ENCODE measurements at regions of chr10 and their contacts with region 1.

Region 1: DNA sequence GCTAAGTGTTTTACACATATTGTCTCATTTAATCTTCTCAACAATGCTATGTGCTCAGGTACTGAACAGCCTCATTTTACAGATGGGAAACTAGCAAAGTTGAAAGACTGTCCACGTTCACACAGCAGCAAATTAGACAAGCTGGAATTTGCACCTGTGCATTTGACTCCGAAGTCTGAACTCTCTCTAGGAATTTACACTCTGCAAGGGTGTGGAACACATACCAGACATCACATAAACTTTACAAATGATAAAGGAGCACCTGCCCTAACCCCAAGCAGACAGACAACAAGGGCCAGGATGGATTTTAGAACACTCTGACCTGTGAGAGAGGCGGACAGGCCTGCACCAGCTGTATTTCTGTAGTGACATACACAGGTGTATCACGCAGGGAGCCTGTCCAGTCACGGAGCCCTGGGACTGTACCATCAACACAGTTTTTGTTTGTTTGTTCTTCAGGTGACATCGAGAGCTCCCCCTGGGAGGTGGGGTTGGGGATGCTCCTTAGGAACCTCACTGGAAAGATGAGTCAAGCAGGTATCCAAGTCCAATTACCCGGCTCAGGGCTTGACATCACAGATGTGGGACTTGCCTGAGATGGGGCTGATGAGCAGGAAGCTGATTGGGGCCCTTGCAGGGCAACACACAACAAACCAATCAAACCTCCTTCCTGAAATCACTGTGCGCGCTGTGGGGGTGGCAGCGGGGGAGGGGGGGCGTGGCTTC is 31.0 kb downstream of the MKI67 start:
- DNase-seq: no peak

Region 2: DNA sequence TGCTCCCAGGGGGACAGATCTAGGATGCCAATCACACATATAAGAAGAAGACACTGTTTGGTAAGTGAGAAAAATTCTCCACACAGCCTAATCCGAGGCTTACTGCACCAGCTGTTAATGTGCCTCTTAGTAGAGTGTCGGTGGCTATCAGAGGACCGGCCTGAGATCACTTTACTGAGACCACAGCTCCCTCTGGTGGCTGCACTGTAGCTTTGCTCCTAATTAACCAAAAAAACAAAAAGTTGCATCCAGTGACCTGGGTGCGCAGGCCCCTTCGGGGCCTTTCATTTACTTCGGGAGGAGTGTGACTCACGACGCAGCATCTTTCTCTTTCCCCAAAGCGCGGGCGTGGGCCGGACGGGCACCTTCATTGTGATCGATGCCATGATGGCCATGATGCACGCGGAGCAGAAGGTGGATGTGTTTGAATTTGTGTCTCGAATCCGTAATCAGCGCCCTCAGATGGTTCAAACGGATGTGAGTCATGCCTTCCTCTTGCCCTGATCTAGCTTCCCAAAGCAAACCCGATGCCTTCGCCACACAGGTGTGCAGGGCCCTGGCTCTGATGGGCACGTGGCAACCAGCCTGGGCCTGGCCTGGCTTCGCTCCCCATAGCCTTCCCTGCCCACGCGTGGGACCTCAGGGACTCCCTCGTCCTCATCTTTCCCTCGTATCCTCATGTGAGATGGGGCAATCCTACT is 25.7 kb before region 1 on chr10:
- intact Hi-C with region 1: loop called in 1 of 2 experiments (anchors 2 kb)
- DNase-seq: peak; percentile 92

Region 3: GRCh38 chr10:129203819-129204218 is 1108.6 kb after region 1 on chr10:
- intact Hi-C with region 1: no loop called
- DNase-seq: no peak